CD4-positive, alpha-beta memory T cell (primary cell): ENCODE measurements at regions of chr16 and their contacts with region 1.

Region 1: DNA sequence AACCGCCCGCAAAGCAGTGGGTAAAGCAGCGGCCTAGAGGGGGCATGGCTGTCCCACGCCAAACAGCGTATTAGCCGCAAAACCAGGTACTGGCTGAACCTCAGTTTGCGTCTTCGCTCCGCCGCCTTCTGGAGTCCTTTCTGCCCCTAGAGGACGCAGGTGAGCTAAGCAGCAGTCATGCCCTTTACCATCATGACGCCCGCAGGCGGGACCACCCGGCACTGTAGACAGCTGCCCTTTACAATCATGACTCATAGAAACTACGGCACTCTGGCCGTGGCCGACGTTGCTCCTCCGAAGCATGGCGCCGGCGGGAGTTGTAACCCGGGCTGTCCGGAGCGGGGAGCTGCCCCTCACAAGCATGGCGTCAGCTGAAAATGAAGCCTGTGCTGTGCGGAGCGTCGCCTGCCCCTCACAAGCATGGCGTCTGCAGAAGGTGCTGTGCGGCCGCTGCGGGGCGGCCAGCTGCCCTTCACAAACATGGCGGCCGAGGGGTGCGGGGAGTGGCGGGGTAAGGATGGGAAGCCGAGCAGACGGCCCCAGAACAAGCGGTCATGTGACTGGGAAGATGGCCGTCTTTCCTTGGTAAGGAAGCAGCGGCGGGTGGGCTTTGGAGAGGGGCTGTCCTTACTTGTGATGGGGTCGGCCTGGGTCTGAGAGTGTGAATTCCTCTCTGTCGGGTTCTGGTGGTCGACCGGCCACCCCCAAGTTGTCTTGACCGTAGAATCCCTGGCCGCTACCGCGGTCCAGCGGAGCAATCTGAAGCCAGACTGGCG is at the start of gene VPS35L:
- DNase-seq: peak; percentile 95 to 98 (median 96)
- H3K4me3 ChIP-seq: peak within 1 kb of the TSS; percentile 87 to 98
- H3K4me3 Mint-ChIP-seq: peak within 1 kb of the TSS; percentile 94 to 98 (median 97)
- H3K27ac ChIP-seq: peak within 1 kb of the TSS; percentile 72
- H3K27ac Mint-ChIP-seq: peak within 1 kb of the TSS; percentile 93 to 98 (median 96)
- H3K4me1 ChIP-seq: peaks cover 12% of the 10 kb centered on the region
- H3K4me1 Mint-ChIP-seq: peaks cover 13 to 36% (median 22%) of the 10 kb centered on the region in 4 donors
- H3K27me3 ChIP-seq: no peaks in the 10 kb centered on the region
- H3K27me3 Mint-ChIP-seq: no peaks in the 10 kb centered on the region
- total RNA-seq, gene VPS35L: 42.2 to 45.7 TPM

Region 2: DNA sequence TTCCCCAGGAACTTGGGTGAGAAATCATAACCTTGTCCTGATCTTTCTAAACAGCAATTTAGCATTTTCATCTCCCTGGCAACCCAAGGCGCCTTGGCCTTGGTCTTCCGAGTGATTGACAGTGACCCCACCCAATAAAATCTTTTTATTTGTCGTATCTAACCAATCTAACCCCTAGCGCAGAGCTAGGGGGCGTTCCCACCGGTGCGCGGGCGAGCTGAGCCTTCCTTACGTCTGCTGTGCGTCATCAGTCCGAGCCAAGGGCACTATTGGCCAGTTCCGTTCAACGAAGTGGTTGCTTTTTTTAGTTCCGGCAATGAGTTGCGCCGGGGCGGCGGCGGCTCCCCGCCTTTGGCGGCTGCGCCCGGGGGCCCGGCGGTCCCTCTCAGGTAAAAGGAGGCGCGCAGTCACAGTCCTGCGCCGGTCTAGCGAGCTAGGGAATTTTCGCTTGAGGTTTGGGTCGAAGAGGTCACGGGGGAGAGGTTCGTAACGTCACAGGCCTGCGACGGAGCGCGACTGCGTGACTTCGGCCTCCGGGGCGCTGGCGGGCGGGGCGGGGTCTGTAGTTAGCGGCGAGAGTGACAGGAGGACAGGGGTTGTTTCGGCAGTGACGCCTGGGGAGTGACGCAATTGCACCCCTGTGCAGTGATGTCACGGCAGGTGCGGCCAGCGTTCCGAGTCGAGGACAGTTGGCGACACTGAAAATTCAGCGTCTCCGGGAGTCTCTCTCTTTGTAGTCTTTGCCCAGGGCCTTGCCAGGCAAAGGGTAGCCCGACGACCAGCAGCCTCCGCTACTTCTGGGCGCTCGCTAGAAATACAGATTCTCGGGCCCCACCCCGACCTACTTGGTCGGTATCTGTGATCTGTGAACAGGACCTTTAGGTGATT is 487.8 kb before region 1 on chr16 and contains the start of gene COQ7:
- CTCF ChIA-PET with region 1: interaction called, 5 read pairs
- POLR2A ChIA-PET with region 1: interaction called, 17 read pairs
- intact Hi-C with region 1: loop called (anchors 1 kb)
- DNase-seq: peak; percentile 99 to 100 (median 100)
- H3K4me3 ChIP-seq: peak within 1 kb of the TSS; percentile 79 to 99
- H3K4me3 Mint-ChIP-seq: peak within 1 kb of the TSS; percentile 92 to 96 (median 94)
- H3K27ac ChIP-seq: peak within 1 kb of the TSS; percentile 100
- H3K27ac Mint-ChIP-seq: peak within 1 kb of the TSS; percentile 93 to 99 (median 99)
- H3K4me1 ChIP-seq: peaks cover 9% of the 10 kb centered on the region
- H3K4me1 Mint-ChIP-seq: peaks cover 3 to 24% (median 14%) of the 10 kb centered on the region in 4 donors
- H3K27me3 ChIP-seq: no peaks in the 10 kb centered on the region
- H3K27me3 Mint-ChIP-seq: peaks cover 0 to 6% of the 10 kb centered on the region in 2 donors
- total RNA-seq, gene COQ7: 16.2 to 19.2 TPM

Region 3: GRCh38 chr16:19502395-19503131 is 52.8 kb before region 1 on chr16:
- CTCF ChIA-PET with region 1: interaction called, 14 read pairs
- POLR2A ChIA-PET with region 1: no interaction called
- intact Hi-C with region 1: no loop called
- DNase-seq: peak; percentile 46 to 62 (median 57)
- H3K4me3 ChIP-seq: no peak overlapping the region
- H3K4me3 Mint-ChIP-seq: no peak overlapping the region
- H3K27ac ChIP-seq: no peak overlapping the region
- H3K27ac Mint-ChIP-seq: peak overlapping the region in 1 of 7 donors; percentile 32
- H3K4me1 ChIP-seq: no peaks in the 10 kb centered on the region
- H3K4me1 Mint-ChIP-seq: no peaks in the 10 kb centered on the region
- H3K27me3 ChIP-seq: no peaks in the 10 kb centered on the region
- H3K27me3 Mint-ChIP-seq: no peaks in the 10 kb centered on the region

Region 4: DNA sequence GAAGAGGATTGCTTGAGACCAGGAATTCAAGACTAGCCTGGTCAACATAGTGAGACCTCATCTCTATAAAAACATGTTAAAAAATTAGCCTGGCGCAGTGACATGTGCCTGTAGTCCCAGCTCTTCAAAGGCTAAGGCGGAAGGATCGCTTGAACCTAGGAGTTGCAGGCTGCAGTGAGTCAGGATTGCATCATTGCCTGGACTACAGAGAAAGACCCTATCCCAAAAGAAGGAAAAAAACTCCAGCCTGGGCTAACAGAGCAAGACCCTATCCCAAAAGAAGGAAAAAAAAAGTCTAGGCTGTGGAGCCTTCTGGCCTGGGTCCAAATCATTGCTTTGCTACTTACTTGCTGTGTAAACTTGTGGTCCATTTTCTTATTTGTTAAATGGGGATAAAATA is 26.7 kb before region 1 on chr16:
- CTCF ChIA-PET with region 1: interaction called, 58 read pairs
- POLR2A ChIA-PET with region 1: interaction called, 66 read pairs
- intact Hi-C with region 1: loop called (anchors 1 kb)
- DNase-seq: no peak
- H3K4me3 ChIP-seq: no peak overlapping the region
- H3K4me3 Mint-ChIP-seq: no peak overlapping the region
- H3K27ac ChIP-seq: no peak overlapping the region
- H3K27ac Mint-ChIP-seq: no peak overlapping the region
- H3K4me1 ChIP-seq: peaks cover 18% of the 10 kb centered on the region
- H3K4me1 Mint-ChIP-seq: peaks cover 10 to 19% (median 15%) of the 10 kb centered on the region in 4 donors
- H3K27me3 ChIP-seq: no peaks in the 10 kb centered on the region
- H3K27me3 Mint-ChIP-seq: no peaks in the 10 kb centered on the region

Region 5: DNA sequence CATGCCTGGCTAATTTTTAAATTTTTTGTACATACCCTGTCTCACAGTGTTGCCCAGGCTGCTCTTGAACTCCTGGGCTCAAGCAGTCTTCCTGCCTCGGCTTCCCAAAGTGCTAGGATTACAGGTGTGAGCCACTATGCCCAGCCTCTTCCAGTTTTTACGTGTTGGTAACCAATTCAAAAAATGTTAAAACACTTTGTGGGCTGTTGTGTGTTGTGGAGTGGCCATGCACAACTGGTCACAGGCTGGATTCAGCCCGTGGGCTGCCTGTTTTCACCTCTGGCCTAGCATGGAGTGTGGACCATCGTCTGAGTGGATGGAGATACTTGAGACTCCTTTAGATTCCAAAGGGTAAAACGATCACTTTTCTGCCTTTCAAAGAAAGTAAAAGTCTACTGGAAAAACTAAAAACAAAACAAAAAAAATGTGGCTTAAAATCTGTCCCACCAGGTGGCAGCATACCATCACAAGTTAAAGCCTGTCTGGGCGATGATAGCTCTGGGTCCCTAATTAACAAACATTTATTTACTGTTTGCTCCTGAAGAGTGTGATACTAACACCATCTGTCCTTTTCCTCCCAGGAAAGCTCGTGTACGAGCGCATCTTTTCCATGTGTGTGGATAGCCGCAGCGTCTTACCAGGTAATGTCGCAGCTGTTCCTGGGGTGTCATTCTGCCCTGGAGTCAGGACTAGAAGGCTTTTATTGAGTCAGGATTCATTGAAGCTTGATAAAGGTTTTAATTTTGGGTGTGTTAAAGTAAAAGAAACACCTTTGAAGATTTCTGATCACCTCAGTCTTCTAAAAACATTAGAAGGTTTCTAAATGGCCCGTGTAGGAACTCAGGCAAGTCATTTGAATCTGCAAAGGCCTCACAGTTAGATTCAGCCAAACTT is 46.0 kb after region 1 on chr16:
- CTCF ChIA-PET with region 1: interaction called, 13 read pairs
- POLR2A ChIA-PET with region 1: no interaction called
- intact Hi-C with region 1: loop called (anchors 2 kb)
- DNase-seq: peak; percentile 39 to 51 (median 43)
- H3K4me3 ChIP-seq: no peak overlapping the region
- H3K4me3 Mint-ChIP-seq: no peak overlapping the region
- H3K27ac ChIP-seq: no peak overlapping the region
- H3K27ac Mint-ChIP-seq: peak overlapping the region in 2 of 7 donors; percentile 15 to 71
- H3K4me1 ChIP-seq: no peaks in the 10 kb centered on the region
- H3K4me1 Mint-ChIP-seq: no peaks in the 10 kb centered on the region
- H3K27me3 ChIP-seq: no peaks in the 10 kb centered on the region
- H3K27me3 Mint-ChIP-seq: no peaks in the 10 kb centered on the region

Region 6: DNA sequence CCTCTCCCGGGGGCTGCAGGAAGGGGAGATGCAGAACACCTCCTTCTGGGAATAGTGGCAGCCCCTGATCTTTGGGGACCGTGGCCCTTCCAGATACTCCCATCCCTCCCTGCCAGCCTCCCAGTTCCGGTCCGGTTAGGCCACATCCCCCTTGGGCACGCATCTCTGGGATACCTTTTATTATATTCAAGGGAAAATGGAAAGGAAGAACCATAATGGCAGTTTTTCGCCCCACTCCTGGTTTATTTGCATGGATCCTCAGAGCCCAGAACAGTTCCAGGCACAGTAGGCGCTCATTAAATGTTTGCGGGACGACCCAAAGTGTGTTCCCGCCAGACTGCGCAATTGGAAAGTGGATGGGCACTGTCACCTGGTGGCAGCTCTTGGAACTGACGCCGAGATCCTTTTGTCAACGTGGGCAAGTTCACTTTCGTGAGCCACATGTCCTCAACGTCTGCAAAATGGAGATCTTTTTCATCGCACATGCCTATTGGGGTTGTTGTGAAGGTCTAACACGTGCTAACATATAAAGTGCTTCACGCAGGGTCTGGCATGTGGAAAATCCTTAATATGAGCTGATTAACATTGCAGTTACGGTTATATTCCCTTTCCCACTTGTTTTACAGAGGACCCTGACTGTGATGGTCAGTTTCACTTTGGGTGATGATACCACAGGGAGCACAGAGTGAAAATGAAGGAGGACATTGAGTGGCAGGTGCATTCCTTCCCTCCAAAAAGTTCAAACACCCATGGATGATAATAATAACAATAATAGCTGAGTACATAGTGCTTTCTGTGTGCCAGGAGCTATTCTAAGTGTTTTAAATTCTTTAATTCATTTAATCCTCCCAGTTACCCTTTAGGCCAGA is 331.0 kb after region 1 on chr16:
- CTCF ChIA-PET with region 1: interaction called, 63 read pairs
- POLR2A ChIA-PET with region 1: interaction called, 14 read pairs
- intact Hi-C with region 1: loop called (anchors 1 kb)
- DNase-seq: peak; percentile 76 to 79 (median 76)
- H3K4me3 ChIP-seq: peak overlapping the region in 1 of 2 donors; percentile 9
- H3K4me3 Mint-ChIP-seq: peak overlapping the region; percentile 79 to 91 (median 86)
- H3K27ac ChIP-seq: no peak overlapping the region
- H3K27ac Mint-ChIP-seq: peak overlapping the region in 3 of 7 donors; percentile 60 to 89 (median 67)
- H3K4me1 ChIP-seq: peaks cover 24% of the 10 kb centered on the region
- H3K4me1 Mint-ChIP-seq: peaks cover 15 to 30% (median 23%) of the 10 kb centered on the region in 4 donors
- H3K27me3 ChIP-seq: peaks cover 12% of the 10 kb centered on the region
- H3K27me3 Mint-ChIP-seq: peaks cover 7 to 27% of the 10 kb centered on the region in 2 donors

Region 7: DNA sequence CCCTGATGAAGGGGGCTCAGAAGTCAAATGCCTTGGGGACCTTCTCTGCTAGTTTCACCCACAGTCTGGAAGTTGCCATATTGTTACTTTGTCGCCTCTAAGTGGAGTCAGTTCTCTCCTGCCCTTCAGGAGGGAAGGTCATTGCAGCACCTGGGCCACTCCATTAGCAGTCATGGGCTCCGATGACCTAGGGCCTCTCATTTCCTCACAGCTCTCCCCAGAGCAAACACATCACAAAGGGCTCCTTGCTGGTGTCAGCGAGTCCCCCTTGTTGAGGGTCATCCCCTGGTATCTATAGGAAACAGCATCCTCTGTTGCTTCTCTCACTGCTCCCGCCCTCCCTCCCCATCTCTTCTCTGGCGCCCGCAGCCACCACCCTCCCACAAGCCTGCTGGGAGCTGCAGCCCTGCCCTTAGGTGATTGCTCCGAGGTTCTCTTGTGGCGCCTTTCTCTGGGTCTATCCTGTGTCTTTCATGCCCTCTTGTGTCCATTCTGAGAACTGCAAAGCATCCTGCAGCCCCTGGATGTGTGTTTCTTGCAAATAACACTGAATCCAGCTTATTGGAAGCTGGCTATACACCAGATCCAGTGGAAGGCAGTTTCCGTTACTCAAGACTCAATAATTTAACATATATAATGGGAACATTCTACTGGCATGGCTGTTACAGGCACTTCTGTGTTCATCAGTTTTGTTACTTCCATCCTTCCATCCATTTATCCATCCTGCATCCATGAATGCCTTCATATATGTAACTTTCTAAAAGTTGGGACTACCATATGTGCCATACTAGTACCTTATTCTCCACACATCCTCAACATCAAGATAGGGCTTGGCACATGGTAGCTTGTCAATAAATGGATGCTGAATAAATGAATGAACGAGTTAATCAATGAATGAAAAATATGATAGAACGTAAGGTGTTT is 828.0 kb after region 1 on chr16:
- CTCF ChIA-PET with region 1: no interaction called
- POLR2A ChIA-PET with region 1: no interaction called
- intact Hi-C with region 1: loop called (anchors 2 kb)
- DNase-seq: peak in 4 of 5 donors; percentile 23 to 40 (median 30)
- H3K4me3 ChIP-seq: no peak overlapping the region
- H3K4me3 Mint-ChIP-seq: no peak overlapping the region
- H3K27ac ChIP-seq: no peak overlapping the region
- H3K27ac Mint-ChIP-seq: no peak overlapping the region
- H3K4me1 ChIP-seq: no peaks in the 10 kb centered on the region
- H3K4me1 Mint-ChIP-seq: peaks cover 0 to 4% (median 2%) of the 10 kb centered on the region in 4 donors
- H3K27me3 ChIP-seq: no peaks in the 10 kb centered on the region
- H3K27me3 Mint-ChIP-seq: peaks cover 10 to 12% of the 10 kb centered on the region in 2 donors